Endothelial cell of umbilical vein (primary cell): ENCODE measurements at regions of chr7 and their contacts with region 1.

Region 1: GRCh38 chr7:55065079-55065478 is 46.3 kb downstream of the EGFR start:
- DNase-seq: peak; percentile 83
- H3K4me3 ChIP-seq: no peak overlapping the region
- H3K27ac ChIP-seq: peak overlapping the region; percentile 95
- H3K4me1 ChIP-seq: peaks cover 19% of the 10 kb centered on the region
- H3K27me3 ChIP-seq: no peaks in the 10 kb centered on the region
- CTCF ChIP-seq: no peak
- POLR2A ChIP-seq: no peak

Region 2: DNA sequence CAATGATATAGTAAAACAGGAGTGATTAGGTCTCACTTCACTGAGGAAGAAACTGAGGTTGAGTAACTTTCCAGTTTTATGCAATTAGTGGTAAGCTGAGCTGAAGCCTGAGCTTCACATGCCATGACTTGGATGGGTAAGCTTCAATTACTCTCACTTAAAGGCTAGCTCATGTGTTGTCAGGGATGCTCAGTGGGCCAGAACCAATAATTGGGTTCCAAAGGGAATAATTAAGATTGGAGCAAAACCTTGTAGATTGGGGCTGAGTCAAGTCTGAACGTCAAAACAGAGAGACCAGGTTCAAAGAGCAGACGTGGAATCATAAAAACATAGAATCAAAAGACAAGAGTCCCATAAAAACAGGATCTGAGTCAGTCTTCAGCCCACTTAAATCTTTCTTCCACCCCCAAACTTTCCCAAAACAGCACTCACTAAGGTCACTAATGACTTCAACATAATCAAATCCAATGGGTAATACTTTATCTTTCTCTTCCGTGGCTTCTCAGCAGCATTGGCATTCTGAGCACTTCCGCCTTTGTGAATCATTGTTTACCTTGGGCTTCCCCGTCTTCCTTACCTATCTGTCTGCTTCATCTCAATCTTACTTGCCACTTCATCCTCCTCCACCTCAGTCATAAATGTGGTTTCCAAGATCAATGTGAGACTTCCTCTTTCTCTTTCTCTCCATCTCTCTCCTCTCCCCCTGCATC is 69.3 kb before region 1 on chr7:
- CTCF ChIA-PET with region 1: no interaction called
- POLR2A ChIA-PET with region 1: no interaction called
- dilution Hi-C with region 1: no loop called
- intact Hi-C with region 1: loop called (anchors 2 kb)
- DNase-seq: peak; percentile 80
- H3K4me3 ChIP-seq: no peak overlapping the region
- H3K27ac ChIP-seq: peak overlapping the region; percentile 15
- H3K4me1 ChIP-seq: peaks cover 20% of the 10 kb centered on the region
- H3K27me3 ChIP-seq: peaks cover 4% of the 10 kb centered on the region in 2 experiments
- CTCF ChIP-seq: no peak
- POLR2A ChIP-seq: peak; percentile 52

Region 3: DNA sequence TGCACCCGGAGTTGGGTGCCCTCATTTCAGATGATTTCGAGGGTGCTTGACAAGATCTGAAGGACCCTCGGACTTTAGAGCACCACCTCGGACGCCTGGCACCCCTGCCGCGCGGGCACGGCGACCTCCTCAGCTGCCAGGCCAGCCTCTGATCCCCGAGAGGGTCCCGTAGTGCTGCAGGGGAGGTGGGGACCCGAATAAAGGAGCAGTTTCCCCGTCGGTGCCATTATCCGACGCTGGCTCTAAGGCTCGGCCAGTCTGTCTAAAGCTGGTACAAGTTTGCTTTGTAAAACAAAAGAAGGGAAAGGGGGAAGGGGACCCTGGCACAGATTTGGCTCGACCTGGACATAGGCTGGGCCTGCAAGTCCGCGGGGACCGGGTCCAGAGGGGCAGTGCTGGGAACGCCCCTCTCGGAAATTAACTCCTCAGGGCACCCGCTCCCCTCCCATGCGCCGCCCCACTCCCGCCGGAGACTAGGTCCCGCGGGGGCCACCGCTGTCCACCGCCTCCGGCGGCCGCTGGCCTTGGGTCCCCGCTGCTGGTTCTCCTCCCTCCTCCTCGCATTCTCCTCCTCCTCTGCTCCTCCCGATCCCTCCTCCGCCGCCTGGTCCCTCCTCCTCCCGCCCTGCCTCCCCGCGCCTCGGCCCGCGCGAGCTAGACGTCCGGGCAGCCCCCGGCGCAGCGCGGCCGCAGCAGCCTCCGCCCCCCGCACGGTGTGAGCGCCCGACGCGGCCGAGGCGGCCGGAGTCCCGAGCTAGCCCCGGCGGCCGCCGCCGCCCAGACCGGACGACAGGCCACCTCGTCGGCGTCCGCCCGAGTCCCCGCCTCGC is 46.5 kb before region 1 on chr7 and contains the start of gene EGFR:
- CTCF ChIA-PET with region 1: interaction called, 6 read pairs
- POLR2A ChIA-PET with region 1: no interaction called
- dilution Hi-C with region 1: no loop called
- intact Hi-C with region 1: loop called (anchors 2 kb)
- DNase-seq: peak; percentile 64
- H3K4me3 ChIP-seq: peak within 1 kb of the TSS; percentile 69 to 84 (median 74)
- H3K27ac ChIP-seq: peak within 1 kb of the TSS; percentile 40
- H3K4me1 ChIP-seq: peaks cover 10% of the 10 kb centered on the region
- H3K27me3 ChIP-seq: peaks cover 17 to 29% of the 10 kb centered on the region in 2 experiments
- CTCF ChIP-seq: no peak
- POLR2A ChIP-seq: no peak
- total RNA-seq, gene EGFR: 4.1 and 5.0 TPM in 2 replicates

Region 4: DNA sequence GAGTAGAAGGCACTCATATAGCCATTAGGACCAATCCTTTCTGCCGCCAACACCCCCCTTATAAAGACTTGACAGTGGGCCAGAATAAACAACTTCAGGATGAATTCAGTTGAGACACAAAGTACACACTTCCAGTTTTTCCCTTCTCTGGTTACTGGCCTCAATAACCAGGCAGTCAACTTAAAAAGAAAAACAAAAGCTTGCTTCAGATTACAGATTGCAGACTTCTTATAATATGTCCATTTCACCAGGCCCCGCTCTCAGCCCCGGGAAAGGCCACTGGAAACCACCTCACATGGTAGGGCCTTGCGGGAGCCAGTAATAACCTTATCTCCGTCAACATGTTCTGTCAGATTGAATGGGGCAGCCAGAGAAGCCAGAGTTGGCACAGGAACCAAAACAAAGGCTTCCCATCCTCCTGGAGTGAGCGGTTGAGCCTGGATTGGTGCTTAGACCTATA is 62.6 kb after region 1 on chr7:
- CTCF ChIA-PET with region 1: interaction called, 7 read pairs
- POLR2A ChIA-PET with region 1: interaction called, 5 read pairs
- dilution Hi-C with region 1: no loop called
- intact Hi-C with region 1: loop called (anchors 1 kb)
- DNase-seq: peak; percentile 97
- H3K4me3 ChIP-seq: no peak overlapping the region
- H3K27ac ChIP-seq: no peak overlapping the region
- H3K4me1 ChIP-seq: peaks cover 35% of the 10 kb centered on the region
- H3K27me3 ChIP-seq: peaks cover 6 to 7% of the 10 kb centered on the region in 2 experiments
- CTCF ChIP-seq: no peak
- POLR2A ChIP-seq: no peak

Region 5: GRCh38 chr7:55192718-55193117 is 127.6 kb after region 1 on chr7:
- CTCF ChIA-PET with region 1: interaction called, 4 read pairs
- POLR2A ChIA-PET with region 1: no interaction called
- dilution Hi-C with region 1: no loop called
- intact Hi-C with region 1: loop called (anchors 1 kb)
- DNase-seq: peak; percentile 90
- H3K4me3 ChIP-seq: no peak overlapping the region
- H3K27ac ChIP-seq: peak overlapping the region; percentile 80
- H3K4me1 ChIP-seq: peaks cover 42% of the 10 kb centered on the region
- H3K27me3 ChIP-seq: no peaks in the 10 kb centered on the region
- CTCF ChIP-seq: no peak
- POLR2A ChIP-seq: peak; percentile 45

Region 6: DNA sequence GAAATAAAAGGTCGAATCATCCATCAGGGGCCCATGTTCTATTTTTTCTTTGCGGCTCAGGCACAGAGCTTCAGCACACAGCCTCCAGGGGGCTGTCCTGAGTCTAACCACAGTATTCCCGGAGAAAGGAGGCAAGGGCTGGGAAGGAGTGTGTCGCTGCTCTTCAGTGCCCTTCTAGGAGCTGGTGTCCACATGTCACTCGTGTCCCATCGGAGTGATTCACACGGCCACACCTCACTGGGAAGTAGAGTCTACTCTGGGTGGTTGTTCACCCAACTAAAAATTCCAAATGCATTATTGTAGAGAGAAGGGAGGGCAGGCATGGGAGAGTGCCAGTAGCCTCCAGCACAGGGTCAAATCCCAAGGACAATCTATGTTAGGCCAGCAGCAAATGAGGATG is 185.2 kb after region 1 on chr7:
- CTCF ChIA-PET with region 1: interaction called, 28 read pairs
- POLR2A ChIA-PET with region 1: interaction called, 7 read pairs
- dilution Hi-C with region 1: no loop called
- intact Hi-C with region 1: loop called (anchors 1 kb)
- DNase-seq: peak; percentile 27
- H3K4me3 ChIP-seq: no peak overlapping the region
- H3K27ac ChIP-seq: no peak overlapping the region
- H3K4me1 ChIP-seq: peaks cover 8% of the 10 kb centered on the region
- H3K27me3 ChIP-seq: peaks cover 27 to 33% of the 10 kb centered on the region in 2 experiments
- CTCF ChIP-seq: peak; percentile 73 to 75
- POLR2A ChIP-seq: no peak